Activated CD4-positive, alpha-beta T cell treated with anti-CD3 and anti-CD28 coated beads, Interleukin-2, amount 10 ng/mL, durations not matched to agents 24 days and 14 days (primary cell): ENCODE measurements at regions of chr6 and their contacts with region 1.

Region 1: DNA sequence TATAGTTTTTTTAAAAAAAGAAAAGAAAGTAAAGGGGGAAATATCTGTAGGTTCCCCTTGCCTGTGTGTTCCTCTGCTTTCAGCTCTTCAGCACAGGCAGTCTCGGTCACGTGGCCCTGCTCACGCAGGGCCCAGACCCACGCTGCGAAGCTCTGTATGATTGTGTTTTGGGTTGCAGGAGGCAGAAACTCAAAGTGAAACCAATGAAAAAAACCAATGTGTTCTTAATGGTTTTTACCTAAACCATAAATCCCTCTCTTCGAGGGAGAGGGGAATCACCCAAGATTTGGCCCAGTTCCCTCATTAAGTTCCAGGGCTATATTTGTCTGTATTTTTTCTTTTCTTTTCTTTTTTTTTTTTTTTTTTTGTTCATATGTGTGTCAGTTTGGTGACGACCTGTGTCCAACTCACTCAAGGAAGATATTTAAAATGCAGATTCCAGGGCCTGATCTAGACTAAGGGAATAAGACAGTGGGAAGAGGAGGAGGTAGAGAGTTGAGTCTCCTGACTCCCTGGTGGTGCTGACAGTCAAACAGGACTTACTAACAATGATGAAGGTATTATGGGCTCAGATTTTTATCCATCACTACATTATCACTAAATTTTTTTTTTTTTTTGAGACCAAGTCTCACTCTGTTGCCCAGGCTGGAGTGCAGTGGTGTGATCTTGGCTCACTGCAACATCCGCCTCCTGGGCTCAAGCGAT is 33.8 kb upstream of the RREB1 start:
- DNase-seq: peak; percentile 89
- H3K4me3 Mint-ChIP-seq: no peak overlapping the region
- H3K27ac Mint-ChIP-seq: peak overlapping the region; percentile 51
- H3K4me1 Mint-ChIP-seq: peaks cover 12% of the 10 kb centered on the region
- H3K27me3 Mint-ChIP-seq: peaks cover 66% of the 10 kb centered on the region

Region 2: GRCh38 chr6:7086488-7086887 is 12.5 kb after region 1 on chr6:
- intact Hi-C with region 1: loop called (anchors 1 kb)
- DNase-seq: peak; percentile 76
- H3K4me3 Mint-ChIP-seq: peak overlapping the region; percentile 76
- H3K27ac Mint-ChIP-seq: no peak overlapping the region
- H3K4me1 Mint-ChIP-seq: peaks cover 25% of the 10 kb centered on the region
- H3K27me3 Mint-ChIP-seq: peaks cover 54% of the 10 kb centered on the region

Region 3: DNA sequence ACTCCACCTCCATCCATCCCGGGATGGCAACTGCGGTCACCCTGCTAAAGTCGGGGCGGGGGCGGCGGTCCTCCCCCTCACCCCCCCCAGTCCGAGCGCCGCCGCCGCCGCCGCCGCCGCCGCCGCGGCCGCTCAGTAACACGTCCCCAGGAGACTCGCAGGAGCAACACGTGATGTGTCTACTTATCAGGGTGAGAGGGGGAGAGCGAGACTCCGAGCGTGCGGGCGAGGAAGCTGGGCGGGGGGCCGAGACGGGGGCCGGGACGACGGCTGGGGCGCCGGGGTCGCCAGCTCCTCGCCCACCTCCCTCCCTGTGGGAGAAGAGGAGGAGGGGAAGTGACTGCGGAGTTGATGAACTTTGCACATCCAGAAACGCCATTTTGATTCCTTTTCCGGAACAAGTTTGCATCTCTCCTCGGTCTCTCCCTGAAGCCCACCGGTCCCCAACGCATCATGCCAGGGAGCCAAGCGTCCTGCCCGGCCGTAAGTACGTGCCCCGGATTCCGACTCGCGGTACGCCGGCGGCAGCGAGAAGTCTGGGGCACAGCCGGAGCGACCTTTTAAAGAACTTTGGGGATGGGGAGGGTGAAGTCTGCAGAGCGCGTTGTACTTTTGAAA is 33.7 kb after region 1 on chr6 and contains the start of gene RREB1:
- intact Hi-C with region 1: loop called (anchors 1 kb)
- DNase-seq: peak; percentile 86
- H3K4me3 Mint-ChIP-seq: peak within 1 kb of the TSS; percentile 96
- H3K27ac Mint-ChIP-seq: peak within 1 kb of the TSS; percentile 96
- H3K4me1 Mint-ChIP-seq: peaks cover 33% of the 10 kb centered on the region
- H3K27me3 Mint-ChIP-seq: peaks cover 8% of the 10 kb centered on the region
- total RNA-seq, gene RREB1: 13.9 and 16.8 TPM in 2 replicates